ENCODE measurements at regions of chr18 and their contacts with region 1.

Region 1: DNA sequence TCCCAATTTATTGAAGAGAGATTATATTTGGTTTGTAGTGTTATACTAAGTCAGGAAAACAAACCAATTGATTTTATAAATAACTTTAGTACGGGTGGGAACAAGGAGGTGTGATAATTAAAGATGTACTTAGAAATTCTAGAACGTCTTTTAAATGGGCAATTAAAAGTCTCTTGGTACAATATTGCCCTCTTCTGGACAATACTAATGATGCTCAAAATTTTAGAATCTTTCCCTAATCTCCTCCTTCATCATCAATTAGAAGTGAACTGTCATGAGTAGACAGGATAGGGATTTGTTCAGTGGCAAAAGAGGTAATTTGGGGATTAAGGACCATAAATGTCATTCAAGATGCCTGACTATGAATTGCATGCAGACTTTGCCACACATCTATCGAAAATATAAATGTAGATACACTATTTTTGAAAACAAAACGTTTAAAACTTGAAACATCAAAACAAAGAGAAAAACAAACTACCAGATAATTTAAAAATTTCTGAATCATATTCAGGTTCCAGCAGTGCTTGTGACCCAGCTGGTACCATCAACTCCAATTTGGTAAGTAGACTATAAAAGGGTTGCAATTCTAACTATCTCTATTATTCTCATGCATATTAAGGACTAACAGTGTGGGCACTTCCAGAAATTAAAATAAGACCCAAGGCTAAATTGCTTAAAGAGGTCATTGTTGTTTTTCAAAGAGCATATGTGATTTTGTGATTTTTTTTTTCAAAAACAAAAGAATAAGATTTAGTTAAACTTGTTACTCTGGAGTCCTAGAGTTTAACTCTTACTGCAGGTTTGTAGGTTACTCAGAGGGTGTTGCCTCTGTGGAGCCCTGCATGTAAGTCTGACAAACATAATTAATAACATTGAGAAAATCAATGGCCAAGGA is 123.5 kb downstream of the LAMA3 start:
- DNase-seq: peak; percentile 54
- H3K4me3 ChIP-seq: no peak overlapping the region
- H3K27ac ChIP-seq: no peak overlapping the region
- H3K4me1 ChIP-seq: no peaks in the 10 kb centered on the region
- H3K27me3 ChIP-seq: no peaks in the 10 kb centered on the region

Region 2: GRCh38 chr18:23629444-23629946 is 183.3 kb before region 1 on chr18:
- in situ Hi-C with region 1: loop called (anchors 10 kb)
- DNase-seq: no peak
- H3K4me3 ChIP-seq: no peak overlapping the region
- H3K27ac ChIP-seq: no peak overlapping the region
- H3K4me1 ChIP-seq: peaks cover 24% of the 10 kb centered on the region
- H3K27me3 ChIP-seq: no peaks in the 10 kb centered on the region